ENCODE measurements at regions of chr1 and their contacts with region 1.

Region 1: DNA sequence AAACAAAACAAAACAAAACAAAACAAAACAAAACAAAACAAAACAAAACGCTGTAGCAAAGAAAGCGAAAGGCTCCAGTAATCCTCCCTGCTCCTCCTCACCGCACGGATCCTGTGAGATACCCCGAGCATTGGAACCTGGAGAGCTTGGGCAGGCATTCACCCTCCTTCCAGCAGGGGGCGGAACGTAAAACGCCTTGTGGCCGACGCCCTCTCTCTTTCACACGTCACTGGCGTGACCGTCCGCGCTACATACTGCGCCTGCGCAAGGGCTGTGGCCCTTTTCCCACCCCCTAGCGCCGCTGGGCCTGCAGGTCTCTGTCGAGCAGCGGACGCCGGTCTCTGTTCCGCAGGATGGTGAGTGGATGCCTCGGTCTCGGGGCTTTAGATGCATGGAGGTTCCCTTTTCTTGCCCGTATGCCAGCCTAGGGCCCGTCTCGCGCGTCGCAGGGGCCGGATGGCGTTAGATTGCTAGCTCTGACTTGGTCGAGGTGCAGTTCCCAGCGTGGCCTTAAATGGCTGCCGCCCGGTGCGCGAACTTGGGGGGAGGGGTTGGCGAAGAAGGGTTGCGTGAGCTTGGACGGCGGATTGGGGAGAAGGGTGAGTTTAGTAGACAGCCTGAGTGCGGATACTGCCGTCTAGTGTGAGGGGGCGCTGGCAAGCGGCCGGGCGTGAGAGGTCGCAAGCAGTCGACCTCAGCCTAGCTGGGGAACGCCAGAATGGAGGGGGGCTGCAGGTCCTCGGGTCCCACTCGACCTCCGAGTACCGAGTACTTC is at the start of gene RPL5:
- DNase-seq: peak; percentile 98
- H3K4me3 ChIP-seq: peak within 1 kb of the TSS; percentile 75 to 93 (median 81)
- H3K27ac ChIP-seq: peak within 1 kb of the TSS; percentile 91 to 97 (median 94)
- H3K4me1 ChIP-seq: peaks cover 0 to 44% (median 39%) of the 10 kb centered on the region in 4 donors
- H3K27me3 ChIP-seq: no peaks in the 10 kb centered on the region
- CTCF ChIP-seq: peak; percentile 85 to 91 (median 89)
- EP300 ChIP-seq: peak in 1 of 4 donors; percentile 57
- POLR2A ChIP-seq: peak; percentile 92 to 95
- total RNA-seq, gene RPL5: 2,086 to 3,236 (median 2,650) TPM

Region 2: DNA sequence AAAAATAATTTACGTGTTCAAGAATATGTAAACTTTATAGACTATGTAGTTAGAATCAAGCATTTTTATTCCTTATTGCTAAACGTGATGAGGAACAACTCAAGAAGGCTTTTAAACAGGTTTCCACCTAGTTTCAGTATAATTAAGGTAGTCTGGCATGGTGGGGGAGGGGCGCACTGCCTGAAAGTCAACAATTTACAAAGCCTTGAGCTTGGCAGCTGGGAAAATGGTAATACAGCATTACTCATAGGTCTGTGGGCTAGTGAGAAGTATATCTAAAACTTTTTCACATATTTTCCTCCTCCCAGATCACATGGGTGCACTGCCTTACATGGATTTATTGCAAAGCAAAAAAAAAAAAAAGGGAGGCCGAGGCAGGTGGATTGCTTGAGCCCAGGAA is 122.2 kb before region 1 on chr1:
- intact Hi-C with region 1: no loop called
- DNase-seq: no peak
- H3K4me3 ChIP-seq: no peak overlapping the region
- H3K27ac ChIP-seq: no peak overlapping the region
- H3K4me1 ChIP-seq: peaks cover 0 to 8% (median 0%) of the 10 kb centered on the region in 4 donors
- H3K27me3 ChIP-seq: no peaks in the 10 kb centered on the region
- CTCF ChIP-seq: no peak
- EP300 ChIP-seq: no peak
- POLR2A ChIP-seq: no peak

Region 3: GRCh38 chr1:92754000-92754718 is 77.8 kb before region 1 on chr1:
- intact Hi-C with region 1: loop called (anchors 5 kb)
- DNase-seq: no peak
- H3K4me3 ChIP-seq: no peak overlapping the region
- H3K27ac ChIP-seq: no peak overlapping the region
- H3K4me1 ChIP-seq: peaks cover 0 to 6% (median 2%) of the 10 kb centered on the region in 4 donors
- H3K27me3 ChIP-seq: no peaks in the 10 kb centered on the region
- CTCF ChIP-seq: no peak
- EP300 ChIP-seq: no peak
- POLR2A ChIP-seq: no peak

Region 4: DNA sequence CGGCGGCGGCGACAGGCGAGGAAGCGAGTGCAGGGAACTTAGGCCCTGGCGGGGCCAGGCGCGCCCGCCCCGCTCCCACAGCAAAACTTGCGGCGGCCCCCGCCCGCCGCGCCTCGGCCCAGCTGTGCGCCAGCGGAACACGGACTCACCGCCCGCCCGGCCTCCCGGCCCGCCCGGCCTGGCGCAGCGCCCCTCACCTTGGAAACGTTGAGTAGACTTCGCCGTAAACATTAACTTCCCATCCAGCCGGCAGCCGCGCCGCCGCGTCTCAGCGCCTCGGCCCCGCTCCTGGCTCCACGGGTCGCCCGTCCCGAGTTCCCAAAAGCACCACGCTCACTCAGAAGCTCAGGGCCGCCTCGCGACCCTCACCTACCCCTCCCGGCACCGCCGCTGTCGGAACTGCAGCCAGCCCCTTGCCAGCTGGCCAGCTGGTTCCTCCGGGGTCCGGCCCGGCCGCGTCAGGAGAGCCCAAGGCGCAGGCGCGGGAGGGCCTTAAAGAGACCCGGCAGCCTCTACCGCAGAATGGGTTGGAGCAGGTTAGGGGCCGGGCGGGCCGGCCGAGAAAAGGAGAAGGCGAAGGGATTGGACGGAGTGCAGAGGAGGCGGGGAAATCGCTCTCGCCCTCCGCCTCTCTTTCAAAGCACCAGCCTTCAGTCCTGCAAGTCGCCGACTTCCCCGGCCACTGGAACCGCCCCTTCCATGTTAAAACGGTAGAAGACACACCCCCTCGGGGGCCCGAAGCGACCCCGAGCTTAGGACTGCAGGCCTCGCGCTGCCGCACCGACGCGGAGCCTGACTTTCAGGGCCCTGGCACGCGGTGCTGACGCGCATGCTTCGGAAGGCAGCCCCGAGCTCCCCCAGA is 47.1 kb before region 1 on chr1 and contains the start of gene EVI5:
- intact Hi-C with region 1: loop called (anchors 2 kb)
- DNase-seq: peak; percentile 97
- H3K4me3 ChIP-seq: peak within 1 kb of the TSS; percentile 63 to 84 (median 76)
- H3K27ac ChIP-seq: peak within 1 kb of the TSS; percentile 92 to 99 (median 98)
- H3K4me1 ChIP-seq: peaks cover 0 to 25% (median 14%) of the 10 kb centered on the region in 4 donors
- H3K27me3 ChIP-seq: no peaks in the 10 kb centered on the region
- CTCF ChIP-seq: peak in 2 of 4 experiments; percentile 19 to 35
- EP300 ChIP-seq: peak in 1 of 4 donors; percentile 6
- POLR2A ChIP-seq: peak; percentile 38 to 63
- total RNA-seq, gene EVI5: 39.9 to 53.5 (median 46.5) TPM

Region 5: DNA sequence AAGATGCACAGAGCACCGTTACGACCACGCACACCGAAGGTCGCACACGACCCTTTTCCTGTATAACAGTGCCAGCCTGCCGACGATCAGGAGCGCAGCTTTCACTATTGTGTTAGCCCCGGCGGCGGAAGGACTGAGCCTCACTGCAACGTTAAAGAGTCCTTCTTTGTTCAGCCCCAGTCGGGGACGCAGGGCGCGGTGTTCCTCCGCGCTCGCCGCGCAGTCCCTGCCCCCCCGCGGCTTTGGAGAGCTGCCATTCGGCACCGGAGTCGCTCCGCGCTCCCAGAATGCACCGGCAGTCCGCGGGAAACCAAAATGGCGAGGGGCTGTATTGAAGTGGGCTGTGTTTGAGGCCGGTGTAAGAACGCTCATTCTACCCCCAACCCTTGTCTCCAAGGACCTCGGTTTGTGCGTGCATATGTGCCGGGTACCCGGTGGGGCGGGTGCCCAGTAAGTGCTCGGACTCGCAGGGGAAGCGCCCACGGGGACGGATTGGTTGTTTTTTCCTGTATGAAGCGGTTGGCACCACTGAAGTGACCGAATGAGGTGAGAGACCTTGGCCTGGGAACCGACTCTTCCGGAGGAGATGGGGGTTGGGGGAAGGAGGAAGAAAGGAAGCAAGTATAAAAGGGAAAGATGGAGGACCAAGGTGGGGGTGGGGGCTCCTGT is 247.2 kb after region 1 on chr1 and contains the start of gene MTF2:
- intact Hi-C with region 1: loop called (anchors 10 kb)
- DNase-seq: peak; percentile 97
- H3K4me3 ChIP-seq: peak within 1 kb of the TSS; percentile 70 to 93 (median 78)
- H3K27ac ChIP-seq: peak within 1 kb of the TSS; percentile 82 to 88 (median 84)
- H3K4me1 ChIP-seq: peaks cover 0 to 32% (median 26%) of the 10 kb centered on the region in 4 donors
- H3K27me3 ChIP-seq: no peaks in the 10 kb centered on the region
- CTCF ChIP-seq: no peak
- EP300 ChIP-seq: peak in 2 of 4 donors; percentile 34 to 58
- POLR2A ChIP-seq: peak; percentile 75 to 84
- total RNA-seq, gene MTF2: 12.3 to 17.8 (median 13.5) TPM